Dorsolateral prefrontal cortex (tissue), 120 donors: ENCODE measurements at regions of chrX and their contacts with region 1.

Region 1: DNA sequence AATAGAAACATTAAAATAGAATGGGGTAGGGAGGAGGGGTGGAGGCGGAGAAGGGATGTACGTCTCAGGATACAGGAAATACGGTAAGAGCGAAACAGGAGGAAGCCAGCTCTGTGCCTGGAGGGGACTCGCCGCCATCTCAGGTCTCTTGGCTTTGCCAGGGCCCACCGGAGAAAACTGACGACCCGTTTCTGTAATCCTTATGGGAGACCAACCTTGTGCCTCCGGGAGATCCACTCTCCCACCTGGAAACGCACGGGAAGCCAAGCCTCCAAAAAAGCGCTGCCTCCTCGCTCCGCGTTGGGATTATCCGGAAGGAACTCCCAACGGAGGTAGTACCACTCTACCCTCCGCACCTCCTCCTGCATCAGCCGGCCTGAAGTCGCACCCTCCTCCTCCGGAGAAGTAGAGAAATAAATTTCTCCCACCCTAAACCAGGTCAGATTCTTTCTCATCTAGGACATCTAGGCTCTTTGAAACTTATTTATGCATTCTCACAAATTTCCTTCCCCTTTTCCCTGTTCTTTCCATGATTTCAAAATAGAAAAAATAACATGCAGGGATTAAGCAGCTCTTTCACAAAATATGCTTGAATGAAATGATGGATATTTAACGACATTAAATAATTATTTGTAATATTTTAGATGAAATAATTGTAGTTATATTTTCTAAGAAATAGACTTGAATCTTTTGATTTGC is at the start of gene NBDY:
- DNase-seq: peak in 8 of 10 donors; percentile 32 to 59 (median 47)
- H3K4me3 ChIP-seq: peak within 1 kb of the TSS; percentile 36 to 77 (median 62)
- H3K27ac ChIP-seq: peak within 1 kb of the TSS in 57 of 59 donors; percentile 3 to 93 (median 79)
- H3K27me3 ChIP-seq: peaks cover 0 to 67% (median 11%) of the 10 kb centered on the region in 45 donors
- CTCF ChIP-seq: peak in 1 of 56 donors; percentile 9
- total RNA-seq, gene NBDY: 17.2 to 46.9 (median 34.2) TPM

Region 2: GRCh38 chrX:56281789-56282188 is 447.5 kb before region 1 on chrX:
- intact Hi-C with region 1: loop called (anchors 5 kb)
- DNase-seq: no peak
- H3K4me3 ChIP-seq: no peak overlapping the region
- H3K27ac ChIP-seq: no peak overlapping the region
- H3K27me3 ChIP-seq: peaks cover 0 to 75% (median 13%) of the 10 kb centered on the region in 45 donors
- CTCF ChIP-seq: peak in 46 of 56 donors; percentile 10 to 61 (median 38)

Region 3: GRCh38 chrX:56563231-56564161 is 165.8 kb before region 1 on chrX and contains the start of gene UBQLN2:
- intact Hi-C with region 1: loop called (anchors 5 to 10 kb)
- DNase-seq: peak; percentile 63 to 88 (median 76)
- H3K4me3 ChIP-seq: peak within 1 kb of the TSS; percentile 39 to 78 (median 64)
- H3K27ac ChIP-seq: peak within 1 kb of the TSS; percentile 39 to 98 (median 95)
- H3K27me3 ChIP-seq: peaks cover 0 to 63% (median 4%) of the 10 kb centered on the region in 45 donors
- CTCF ChIP-seq: peak in 25 of 56 donors; percentile 7 to 48 (median 19)
- total RNA-seq, gene UBQLN2: 42.7 to 92.9 (median 76.9) TPM

Region 4: DNA sequence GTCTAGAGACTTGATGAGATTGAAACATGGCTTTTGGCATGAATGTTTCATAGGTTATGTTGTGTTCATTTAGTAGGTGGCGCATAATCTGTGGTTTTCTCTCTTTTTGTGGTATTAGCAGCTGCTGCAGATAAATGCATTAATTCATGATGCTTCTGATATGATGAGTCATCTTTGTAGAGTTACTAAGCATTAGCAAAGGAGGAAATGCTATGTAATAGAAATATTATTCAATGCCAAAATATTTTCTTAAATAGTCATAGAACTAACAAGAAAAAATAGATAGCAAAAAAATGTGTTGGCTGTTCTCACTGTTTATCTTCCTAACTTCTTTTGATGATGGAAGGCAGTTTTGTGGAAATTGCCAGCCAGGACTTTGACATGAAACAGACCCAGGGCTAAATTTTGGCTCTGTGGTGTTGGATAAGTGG is 866.1 kb after region 1 on chrX:
- intact Hi-C with region 1: loop called in 1 of 2 experiments (anchors 10 kb)
- DNase-seq: no peak
- H3K4me3 ChIP-seq: peak overlapping the region in 45 of 59 donors; percentile 1 to 52 (median 25)
- H3K27ac ChIP-seq: peak overlapping the region in 5 of 59 donors; percentile 6 to 48 (median 22)
- H3K27me3 ChIP-seq: peaks cover 0 to 36% (median 0%) of the 10 kb centered on the region in 45 donors
- CTCF ChIP-seq: no peak